ENCODE measurements at regions of chr9 and their contacts with region 1.

Region 1: DNA sequence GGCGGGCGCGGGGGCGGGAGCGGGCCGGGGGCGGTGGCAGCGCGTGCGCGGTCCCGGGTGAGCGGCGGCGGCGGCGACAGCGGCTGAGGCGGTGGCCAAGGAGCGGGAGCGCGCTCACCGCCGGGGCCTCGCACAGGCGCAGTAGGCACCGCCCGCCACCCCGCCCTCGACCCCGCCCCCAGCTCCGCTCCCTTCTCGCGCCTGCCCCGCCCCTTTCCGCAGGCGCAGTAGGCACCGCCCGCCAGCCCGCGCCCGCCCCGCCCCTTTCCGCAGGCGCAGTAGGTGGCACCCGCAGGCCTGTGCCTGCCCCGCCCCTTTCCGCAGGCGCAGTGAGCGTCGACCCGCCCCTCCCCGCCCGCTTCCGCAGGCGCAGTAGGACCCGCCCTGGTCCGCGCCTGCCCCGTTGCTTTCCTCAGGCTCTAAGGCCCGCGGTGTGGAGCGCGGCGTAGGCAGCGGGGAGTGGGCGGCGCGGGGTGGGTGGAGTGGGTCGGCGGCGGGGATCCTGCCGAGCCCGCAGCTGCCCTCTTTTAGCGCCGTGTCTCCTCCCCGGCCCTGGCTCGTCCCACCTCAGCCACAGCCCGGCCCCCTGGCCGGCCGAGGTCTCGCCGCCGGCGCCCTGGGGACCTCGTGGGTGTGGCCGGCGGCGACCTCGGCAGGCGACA is at the start of gene CAMSAP1:
- DNase-seq: peak; percentile 98
- H3K4me3 ChIP-seq: peak within 1 kb of the TSS; percentile 71 to 98 (median 85)
- H3K27ac ChIP-seq: peak within 1 kb of the TSS; percentile 75 to 94 (median 89)
- H3K4me1 ChIP-seq: peaks cover 29 to 73% (median 58%) of the 10 kb centered on the region in 6 donors
- H3K27me3 ChIP-seq: no peaks in the 10 kb centered on the region
- CTCF ChIP-seq: peak in 2 of 11 experiments; percentile 12 to 15
- POLR2A ChIP-seq: peak in 1 of 3 donors; percentile 53
- total RNA-seq, gene CAMSAP1: 18.6 to 34.3 (median 20.0) TPM

Region 2: GRCh38 chr9:135961277-135961705 is 53.7 kb after region 1 on chr9 and contains the start of gene UBAC1:
- intact Hi-C with region 1: loop called (anchors 5 kb)
- DNase-seq: peak; percentile 99
- H3K4me3 ChIP-seq: peak within 1 kb of the TSS; percentile 76 to 99 (median 88)
- H3K27ac ChIP-seq: peak within 1 kb of the TSS; percentile 70 to 92 (median 86)
- H3K4me1 ChIP-seq: peaks cover 10 to 59% (median 32%) of the 10 kb centered on the region in 6 donors
- H3K27me3 ChIP-seq: peaks cover 0 to 14% (median 0%) of the 10 kb centered on the region in 7 donors
- CTCF ChIP-seq: peak; percentile 32 to 77 (median 60)
- POLR2A ChIP-seq: peak in 1 of 3 donors; percentile 4
- total RNA-seq, gene UBAC1: 32.3 to 45.8 (median 34.0) TPM

Region 3: GRCh38 chr9:136410500-136411287 is 503.1 kb after region 1 on chr9 and contains the starts of genes ENTR1 and PMPCA:
- intact Hi-C with region 1: no loop called
- DNase-seq: peak; percentile 98
- H3K4me3 ChIP-seq: peak within 1 kb of the TSS; percentile 88 to 99 (median 97)
- H3K27ac ChIP-seq: peak within 1 kb of the TSS; percentile 83 to 94 (median 90)
- H3K4me1 ChIP-seq: peaks cover 19 to 72% (median 40%) of the 10 kb centered on the region in 6 donors
- H3K27me3 ChIP-seq: no peaks in the 10 kb centered on the region
- CTCF ChIP-seq: peak in 1 of 11 experiments; percentile 12
- POLR2A ChIP-seq: peak; percentile 25 to 87 (median 63)
- total RNA-seq, gene ENTR1: 38.5 to 67.4 (median 58.7) TPM
- total RNA-seq, gene PMPCA: 36.8 to 55.1 (median 46.0) TPM

Measured in spleen (tissue), 13 donors.